ENCODE measurements at regions of chr20 and their contacts with region 1.

Region 1: GRCh38 chr20:29123861-29124260 is 2133.6 kb upstream of the DEFB115 start:
- DNase-seq: no peak
- H3K4me3 ChIP-seq: no peak overlapping the region
- H3K27ac ChIP-seq: no peak overlapping the region
- H3K4me1 ChIP-seq: no peaks in the 10 kb centered on the region
- H3K27me3 ChIP-seq: no peaks in the 10 kb centered on the region
- CTCF ChIP-seq: no peak

Region 2: DNA sequence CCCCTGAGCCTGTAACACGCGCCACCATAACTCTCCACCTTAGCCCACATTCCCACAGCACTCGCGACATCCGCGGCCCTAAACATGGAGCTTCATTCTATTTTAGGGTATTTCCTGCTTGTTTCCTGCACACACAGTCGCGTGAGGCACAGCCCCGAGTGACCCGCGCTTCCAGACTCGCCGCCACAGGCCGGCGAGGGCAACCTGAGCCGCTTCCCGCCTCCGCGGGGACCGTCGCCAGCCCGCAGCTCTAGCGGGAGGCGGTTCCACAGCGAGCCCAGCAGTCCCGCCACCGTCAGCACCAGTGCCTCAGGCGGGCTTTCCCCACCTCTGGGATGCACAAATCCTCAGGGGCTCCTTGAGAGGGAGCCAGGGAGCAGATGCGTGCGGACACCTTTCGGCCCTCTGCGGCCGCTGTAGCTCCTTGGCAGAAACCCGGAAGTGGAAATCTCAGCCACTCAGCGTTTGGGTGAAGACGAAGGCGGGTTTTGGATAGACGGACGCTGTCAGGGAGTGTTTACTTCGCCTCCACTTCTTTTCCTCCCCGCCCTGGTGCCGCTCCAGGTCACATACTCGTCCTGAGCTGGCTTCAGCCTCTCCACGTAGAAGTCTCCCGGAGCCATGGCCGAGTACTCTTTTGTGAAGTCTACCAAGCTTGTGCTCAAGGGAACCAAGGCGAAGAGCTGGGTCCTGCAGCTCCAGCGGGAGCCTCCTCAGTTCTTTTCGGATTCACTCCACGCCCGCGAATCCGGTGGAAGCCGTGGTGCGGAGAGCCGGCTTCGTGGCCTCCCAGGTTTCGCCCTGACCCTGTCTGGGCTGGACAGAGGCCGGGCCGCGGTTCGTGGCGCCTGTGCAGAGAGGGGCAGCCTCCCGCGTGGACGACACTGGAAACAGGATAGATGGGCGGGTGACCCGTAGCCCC is 43.8 kb before region 1 on chr20:
- intact Hi-C with region 1: no loop called
- DNase-seq: peak in 2 of 5 donors; percentile 72 to 76
- H3K4me3 ChIP-seq: peak overlapping the region in 1 of 3 donors; percentile 62
- H3K27ac ChIP-seq: no peak overlapping the region
- H3K4me1 ChIP-seq: no peaks in the 10 kb centered on the region
- H3K27me3 ChIP-seq: no peaks in the 10 kb centered on the region
- CTCF ChIP-seq: no peak

Region 3: DNA sequence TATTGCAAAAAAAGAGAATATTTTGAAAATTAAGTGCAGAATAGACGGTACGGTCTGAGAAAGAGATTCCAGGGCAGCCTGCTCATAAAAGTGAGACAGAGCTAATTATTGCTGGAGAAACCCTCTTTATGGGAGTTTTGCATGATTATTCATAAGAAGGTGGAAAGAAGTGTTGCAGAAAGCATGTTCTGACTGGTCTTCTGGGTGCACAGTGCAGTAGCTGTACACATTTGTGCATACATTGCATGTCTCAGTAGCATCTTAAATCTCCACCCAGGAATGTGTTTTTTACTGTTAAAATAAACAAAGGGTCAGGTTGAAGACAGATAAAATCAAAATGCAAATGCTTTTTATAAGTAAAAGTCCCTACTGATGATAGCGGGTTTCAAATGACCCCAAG is 320.0 kb after region 1 on chr20:
- intact Hi-C with region 1: no loop called
- DNase-seq: peak in 2 of 5 donors; percentile 2 to 31
- H3K4me3 ChIP-seq: no peak overlapping the region
- H3K27ac ChIP-seq: no peak overlapping the region
- H3K4me1 ChIP-seq: no peaks in the 10 kb centered on the region
- H3K27me3 ChIP-seq: no peaks in the 10 kb centered on the region
- CTCF ChIP-seq: no peak

Region 4: DNA sequence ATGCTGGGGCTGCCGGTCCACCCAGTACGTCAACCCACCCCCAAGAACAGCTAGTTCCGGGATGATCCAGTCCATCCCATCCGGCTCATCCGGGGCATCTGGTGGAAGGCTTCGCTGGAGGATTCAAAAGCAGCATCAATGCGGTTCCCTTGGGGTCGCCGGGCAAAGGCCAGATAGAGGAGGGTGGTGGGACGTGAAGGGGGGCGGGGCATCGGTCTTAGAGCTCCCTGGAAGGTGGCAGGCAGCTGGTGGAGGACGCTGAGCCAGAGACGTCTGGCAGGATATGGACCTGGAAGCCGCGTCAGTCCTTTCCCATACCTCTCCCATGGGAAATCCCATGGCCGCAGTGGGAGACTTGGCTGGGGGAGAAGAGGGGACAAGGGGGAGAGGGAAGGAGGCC is 632.8 kb after region 1 on chr20:
- intact Hi-C with region 1: no loop called
- DNase-seq: peak in 1 of 5 donors; percentile 63
- H3K4me3 ChIP-seq: no peak overlapping the region
- H3K27ac ChIP-seq: no peak overlapping the region
- H3K4me1 ChIP-seq: no peaks in the 10 kb centered on the region
- H3K27me3 ChIP-seq: no peaks in the 10 kb centered on the region
- CTCF ChIP-seq: no peak

Region 5: GRCh38 chr20:29878281-29878741 is 754.5 kb after region 1 on chr20:
- intact Hi-C with region 1: loop called (anchors 5 kb)
- DNase-seq: peak in 2 of 5 donors; percentile 65 to 83
- H3K4me3 ChIP-seq: peak overlapping the region in 1 of 3 donors; percentile 18
- H3K27ac ChIP-seq: no peak overlapping the region
- H3K4me1 ChIP-seq: no peaks in the 10 kb centered on the region
- H3K27me3 ChIP-seq: no peaks in the 10 kb centered on the region
- CTCF ChIP-seq: no peak